ENCODE measurements at regions of chr11 and their contacts with region 1.

Region 1: DNA sequence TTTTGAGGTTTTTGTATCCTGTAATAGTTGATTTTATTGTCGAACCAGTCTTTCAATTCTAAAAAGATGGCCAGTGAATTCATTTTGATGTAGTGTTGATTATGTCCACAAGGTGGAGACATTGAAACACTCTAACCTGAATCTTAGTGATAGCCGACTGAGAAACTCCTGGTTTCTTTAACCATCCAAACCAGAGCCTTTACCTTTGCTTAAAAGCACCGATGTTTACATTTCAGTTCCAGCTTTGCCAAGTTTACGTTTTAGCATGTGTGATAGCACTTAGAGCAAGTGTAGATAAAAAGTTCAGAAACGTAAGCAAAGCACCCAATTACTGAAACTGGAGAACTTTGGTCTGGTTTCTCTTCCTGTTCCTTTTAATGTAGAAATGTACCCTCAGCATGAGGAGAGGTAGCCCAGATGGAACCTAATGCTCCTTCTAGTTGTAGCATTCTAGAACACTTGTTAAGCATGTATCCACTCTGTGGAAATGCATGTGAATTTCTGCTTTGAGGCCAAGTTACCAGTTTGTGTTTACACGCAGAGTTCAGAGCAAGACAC is 208.6 kb downstream of the DBX1 start:
- DNase-seq: peak; percentile 55

Region 2: GRCh38 chr11:19769820-19770219 is 181.8 kb before region 1 on chr11:
- CTCF ChIA-PET with region 1: no interaction called
- POLR2A ChIA-PET with region 1: no interaction called
- DNase-seq: no peak

Region 3: GRCh38 chr11:20127671-20128527 is 176.3 kb after region 1 on chr11:
- CTCF ChIA-PET with region 1: interaction called, 11 read pairs
- POLR2A ChIA-PET with region 1: no interaction called
- DNase-seq: peak; percentile 80